ENCODE measurements at regions of chr1 and their contacts with region 1.

Region 1: DNA sequence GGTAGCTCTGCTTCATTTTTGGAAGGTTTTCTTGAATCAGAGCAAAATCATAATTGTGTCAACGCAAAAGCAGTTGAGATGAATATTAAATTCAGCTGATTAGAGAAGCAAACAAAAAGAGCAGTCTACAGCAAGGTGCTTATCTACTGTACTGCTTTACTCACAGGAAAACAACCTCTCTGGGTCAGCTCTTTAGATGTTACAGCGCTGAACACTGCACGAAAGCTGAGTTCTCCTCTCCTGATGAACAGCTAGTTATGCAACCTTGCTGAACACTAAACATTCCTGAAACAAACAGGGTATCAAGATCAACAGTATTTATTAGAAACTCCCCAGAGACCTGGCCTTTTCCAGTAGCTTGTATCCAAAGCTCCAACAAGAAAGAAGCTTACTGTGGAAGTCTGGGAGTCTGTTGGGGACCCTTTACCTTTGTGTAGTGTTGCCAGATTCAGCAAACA is 41.3 kb downstream of the TBCE start:
- DNase-seq: peak; percentile 80
- ATAC-seq: peak; percentile 76
- H3K4me3 ChIP-seq: peak overlapping the region; percentile 4 to 38 (median 29); a peak in 3 of 6 replicates
- H3K27ac ChIP-seq: peak overlapping the region; percentile 99
- H3K4me1 ChIP-seq: peaks cover 76% of the 10 kb centered on the region
- H3K27me3 ChIP-seq: no peaks in the 10 kb centered on the region
- CTCF ChIP-seq: no peak
- EP300 ChIP-seq: peak in 1 of 2 experiments; percentile 69; a peak in 2 of 4 replicates
- POLR2A ChIP-seq: peak in 1 of 2 experiments; percentile 19; a peak in 1 of 4 replicates
- RAD21 ChIP-seq: no peak

Region 2: DNA sequence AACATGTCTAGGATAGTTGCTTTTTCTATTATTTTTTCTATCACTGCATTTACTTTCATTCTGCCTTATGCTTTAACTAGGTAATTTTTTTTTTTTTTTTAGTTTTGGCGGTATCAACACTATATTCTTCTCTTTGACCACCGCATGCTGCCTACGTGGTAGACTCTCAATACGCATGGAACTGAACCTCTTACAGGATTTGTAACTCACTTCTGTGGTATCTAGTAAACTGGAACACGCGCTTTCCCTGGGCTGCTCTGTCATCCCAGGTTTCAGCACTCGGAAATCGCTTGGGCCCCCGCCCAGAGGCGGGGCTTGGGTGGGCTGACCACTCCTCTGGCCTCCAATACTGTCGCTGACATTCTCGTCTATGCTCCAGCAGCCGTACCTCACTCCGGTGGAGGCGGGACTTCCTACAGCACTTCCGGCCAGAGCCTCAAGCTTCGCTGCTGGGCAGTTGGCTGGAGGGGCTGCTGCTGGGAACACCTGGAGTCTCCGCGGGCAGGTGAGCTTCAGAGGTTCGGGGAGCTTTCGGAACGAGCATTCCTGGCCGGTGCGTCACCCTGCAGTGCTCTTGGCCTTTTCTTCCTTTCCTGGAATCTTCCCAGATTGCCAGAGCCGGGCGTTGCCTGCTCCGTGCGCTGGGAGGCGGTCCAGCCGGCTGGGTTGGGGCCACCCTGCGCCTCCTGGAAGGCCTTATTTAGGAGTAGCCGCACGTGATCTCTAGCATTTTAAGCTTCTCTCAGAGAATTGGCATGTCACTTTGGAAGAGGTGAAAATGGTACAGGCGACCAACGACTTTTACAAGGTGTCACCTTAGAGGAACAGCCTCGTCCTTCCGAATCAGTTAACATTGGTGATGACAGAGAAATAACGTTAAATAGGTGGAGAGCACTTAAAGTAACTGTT is 41.3 kb before region 1 on chr1 and contains the start of gene TBCE:
- CTCF ChIA-PET with region 1: no interaction called
- POLR2A ChIA-PET with region 1: interaction called, 12 read pairs
- in situ Hi-C with region 1: no loop called
- intact Hi-C with region 1: no loop called
- DNase-seq: peak; percentile 96
- ATAC-seq: peak; percentile 100
- H3K4me3 ChIP-seq: peak within 1 kb of the TSS; percentile 84 to 97 (median 97)
- H3K27ac ChIP-seq: peak within 1 kb of the TSS; percentile 78
- H3K4me1 ChIP-seq: peaks cover 35% of the 10 kb centered on the region
- H3K27me3 ChIP-seq: no peaks in the 10 kb centered on the region; a peak in 1 of 5 replicates
- CTCF ChIP-seq: peak; percentile 29
- EP300 ChIP-seq: no peak
- POLR2A ChIP-seq: peak; percentile 96 to 97
- RAD21 ChIP-seq: peak; percentile 50
- total RNA-seq, gene TBCE: 25.6 and 33.0 TPM in 2 replicates

Region 3: GRCh38 chr1:235423191-235423652 is 14.7 kb after region 1 on chr1:
- CTCF ChIA-PET with region 1: no interaction called
- POLR2A ChIA-PET with region 1: no interaction called
- in situ Hi-C with region 1: no loop called
- intact Hi-C with region 1: no loop called
- DNase-seq: no peak
- ATAC-seq: no peak
- H3K4me3 ChIP-seq: no peak overlapping the region
- H3K27ac ChIP-seq: no peak overlapping the region
- H3K4me1 ChIP-seq: no peaks in the 10 kb centered on the region
- H3K27me3 ChIP-seq: no peaks in the 10 kb centered on the region; a peak in 1 of 5 replicates
- CTCF ChIP-seq: no peak
- EP300 ChIP-seq: no peak
- POLR2A ChIP-seq: no peak
- RAD21 ChIP-seq: no peak

Measured in HepG2 (cell line).